Activated CD8-positive, alpha-beta T cell treated with anti-CD3 and anti-CD28 coated beads for 36 hours (primary cell): ENCODE measurements at regions of chr3 and their contacts with region 1.

Region 1: DNA sequence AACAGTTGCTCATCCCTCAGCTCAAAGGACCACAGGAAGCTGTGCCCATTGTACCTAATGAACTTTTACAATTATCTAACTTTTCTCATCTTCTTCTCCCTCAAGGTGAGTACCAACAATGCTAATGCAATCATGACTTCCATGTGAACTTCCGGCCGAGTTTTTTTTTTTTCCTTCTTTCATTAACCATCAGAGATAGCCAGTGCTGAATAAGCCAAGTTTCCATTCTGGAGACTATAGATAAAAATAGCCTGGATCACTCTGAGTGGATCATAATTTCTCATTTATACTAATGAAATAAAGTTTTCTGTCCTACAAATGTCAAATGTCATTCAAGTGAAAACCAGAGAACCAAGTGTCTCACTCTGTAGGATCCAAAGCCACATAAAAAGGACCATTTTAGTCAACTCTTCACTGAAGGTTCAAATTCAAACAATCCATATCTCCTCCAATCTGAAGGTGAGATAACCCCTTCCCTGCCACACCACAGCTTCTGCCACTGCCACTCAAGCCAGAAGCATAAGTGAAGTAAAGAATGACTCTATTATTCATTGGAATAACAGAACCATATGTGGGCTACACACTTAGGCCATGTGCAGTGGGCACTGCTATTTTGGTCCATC is 5.5 kb downstream of the SUMF1 start:
- DNase-seq: no peak
- ATAC-seq: no peak
- H3K4me3 Mint-ChIP-seq: no peak overlapping the region
- H3K27ac Mint-ChIP-seq: no peak overlapping the region
- H3K4me1 Mint-ChIP-seq: peaks cover 22% of the 10 kb centered on the region
- H3K27me3 Mint-ChIP-seq: no peaks in the 10 kb centered on the region
- CTCF ChIP-seq: no peak

Region 2: GRCh38 chr3:4426601-4427344 is 34.8 kb before region 1 on chr3:
- CTCF ChIA-PET with region 1: no interaction called
- POLR2A ChIA-PET with region 1: no interaction called
- intact Hi-C with region 1: no loop called
- DNase-seq: no peak
- ATAC-seq: no peak
- H3K4me3 Mint-ChIP-seq: no peak overlapping the region
- H3K27ac Mint-ChIP-seq: peak overlapping the region; percentile 44
- H3K4me1 Mint-ChIP-seq: peaks cover 21% of the 10 kb centered on the region
- H3K27me3 Mint-ChIP-seq: no peaks in the 10 kb centered on the region
- CTCF ChIP-seq: no peak

Region 3: GRCh38 chr3:4447295-4447999 is 14.1 kb before region 1 on chr3:
- CTCF ChIA-PET with region 1: interaction called, 10 read pairs
- POLR2A ChIA-PET with region 1: no interaction called
- intact Hi-C with region 1: no loop called
- DNase-seq: no peak
- ATAC-seq: no peak
- H3K4me3 Mint-ChIP-seq: no peak overlapping the region
- H3K27ac Mint-ChIP-seq: no peak overlapping the region
- H3K4me1 Mint-ChIP-seq: no peaks in the 10 kb centered on the region
- H3K27me3 Mint-ChIP-seq: no peaks in the 10 kb centered on the region
- CTCF ChIP-seq: no peak

Region 4: GRCh38 chr3:5456199-5456598 is 994.6 kb after region 1 on chr3:
- CTCF ChIA-PET with region 1: no interaction called
- POLR2A ChIA-PET with region 1: no interaction called
- intact Hi-C with region 1: no loop called
- DNase-seq: no peak
- ATAC-seq: no peak
- H3K4me3 Mint-ChIP-seq: no peak overlapping the region
- H3K27ac Mint-ChIP-seq: no peak overlapping the region
- H3K4me1 Mint-ChIP-seq: no peaks in the 10 kb centered on the region
- H3K27me3 Mint-ChIP-seq: peaks cover 8% of the 10 kb centered on the region
- CTCF ChIP-seq: no peak